ENCODE measurements at regions of chr3 and their contacts with region 1.

Region 1: DNA sequence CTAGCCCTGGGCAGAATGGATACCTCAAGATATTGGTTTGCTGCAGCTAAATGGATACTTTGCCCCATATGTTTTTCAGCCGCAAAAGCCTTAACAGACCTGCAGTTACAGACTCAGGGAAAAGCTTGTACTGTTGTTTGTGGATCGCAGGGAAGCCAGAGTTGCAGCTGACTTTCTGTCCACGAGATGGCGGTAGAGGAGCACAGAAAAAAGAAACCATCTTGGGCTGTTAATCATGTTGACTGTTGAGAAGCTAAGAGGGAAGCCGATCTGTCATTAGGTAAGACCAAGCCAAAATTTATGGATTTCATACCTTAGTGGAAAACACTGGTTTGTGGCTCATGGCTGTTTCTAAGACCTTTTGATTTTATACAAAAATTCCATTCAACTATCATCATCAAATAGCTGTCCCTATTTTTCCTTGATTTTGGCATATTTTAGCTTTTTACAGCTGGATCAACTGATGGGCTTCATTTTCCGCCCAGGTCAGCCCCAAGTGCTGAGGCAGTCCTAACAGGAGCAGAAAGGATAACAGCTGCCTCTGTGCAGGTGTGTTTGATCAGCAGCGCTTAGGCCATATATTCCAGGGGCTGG is 205.7 kb upstream of the ZPLD1 start:
- DNase-seq: peak; percentile 80 to 92 (median 89)
- H3K4me3 ChIP-seq: no peak overlapping the region
- H3K27ac ChIP-seq: no peak overlapping the region
- H3K4me1 ChIP-seq: peaks cover 3 to 25% (median 15%) of the 10 kb centered on the region in 4 experiments
- H3K27me3 ChIP-seq: no peaks in the 10 kb centered on the region

Region 2: GRCh38 chr3:101433653-101434052 is 795.5 kb before region 1 on chr3:
- CTCF ChIA-PET with region 1: no interaction called
- POLR2A ChIA-PET with region 1: no interaction called
- DNase-seq: no peak
- H3K4me3 ChIP-seq: no peak overlapping the region
- H3K27ac ChIP-seq: no peak overlapping the region
- H3K4me1 ChIP-seq: no peaks in the 10 kb centered on the region
- H3K27me3 ChIP-seq: no peaks in the 10 kb centered on the region

Region 3: GRCh38 chr3:101816215-101817149 is 412.7 kb before region 1 on chr3:
- CTCF ChIA-PET with region 1: interaction called, 414 read pairs
- POLR2A ChIA-PET with region 1: no interaction called
- DNase-seq: no peak
- H3K4me3 ChIP-seq: no peak overlapping the region
- H3K27ac ChIP-seq: no peak overlapping the region
- H3K4me1 ChIP-seq: peaks cover 0 to 31% (median 3%) of the 10 kb centered on the region in 4 experiments
- H3K27me3 ChIP-seq: no peaks in the 10 kb centered on the region

Region 4: DNA sequence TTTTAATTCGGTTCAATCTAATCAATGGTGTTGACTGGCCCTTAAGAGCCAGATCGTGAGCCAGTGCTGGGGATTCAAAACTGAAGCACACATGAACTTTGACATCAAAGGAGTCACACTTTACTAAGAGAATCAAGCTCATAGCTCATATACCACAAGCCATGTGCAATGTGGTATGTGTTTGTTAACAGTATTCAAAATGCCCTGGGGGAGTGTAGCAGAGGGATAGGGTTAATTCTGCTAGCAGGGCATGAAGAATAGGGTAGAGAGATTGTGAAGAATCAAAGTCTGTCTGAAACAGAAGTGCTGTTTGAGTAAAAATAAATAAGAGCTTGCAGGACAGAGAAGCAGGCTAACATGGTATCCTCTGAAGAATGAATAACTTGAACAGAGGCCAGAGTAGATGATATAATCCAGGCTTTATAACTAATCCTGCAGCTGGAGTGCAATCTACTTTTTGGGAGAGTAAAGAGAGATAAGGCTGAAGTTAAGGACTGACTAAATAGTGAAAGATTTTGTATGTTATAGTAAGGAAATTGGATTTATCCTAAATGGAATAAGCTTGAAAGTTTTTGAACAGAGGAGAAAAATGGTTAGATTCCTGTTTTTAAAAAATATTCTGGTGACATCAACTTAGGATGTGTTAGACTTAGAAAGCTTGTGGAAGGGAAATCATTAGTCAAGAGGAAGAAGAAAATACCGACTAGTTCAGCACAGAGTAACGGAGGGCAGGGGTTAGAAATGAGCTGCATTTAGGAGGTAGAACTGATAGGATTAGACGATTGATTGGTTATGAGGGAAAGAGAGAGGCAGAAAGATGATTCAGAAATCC is 87.8 kb before region 1 on chr3:
- CTCF ChIA-PET with region 1: interaction called, 12 read pairs
- POLR2A ChIA-PET with region 1: no interaction called
- DNase-seq: no peak
- H3K4me3 ChIP-seq: no peak overlapping the region
- H3K27ac ChIP-seq: no peak overlapping the region
- H3K4me1 ChIP-seq: peaks cover 0 to 3% (median 0%) of the 10 kb centered on the region in 4 experiments
- H3K27me3 ChIP-seq: no peaks in the 10 kb centered on the region

Region 5: GRCh38 chr3:102240720-102241119 is 11.6 kb after region 1 on chr3:
- CTCF ChIA-PET with region 1: interaction called, 21 read pairs
- POLR2A ChIA-PET with region 1: no interaction called
- DNase-seq: no peak
- H3K4me3 ChIP-seq: no peak overlapping the region
- H3K27ac ChIP-seq: no peak overlapping the region
- H3K4me1 ChIP-seq: no peaks in the 10 kb centered on the region
- H3K27me3 ChIP-seq: no peaks in the 10 kb centered on the region

Region 6: GRCh38 chr3:102415553-102415952 is 186.4 kb after region 1 on chr3:
- CTCF ChIA-PET with region 1: no interaction called
- POLR2A ChIA-PET with region 1: no interaction called
- DNase-seq: peak in 2 of 3 donors; percentile 25
- H3K4me3 ChIP-seq: peak overlapping the region in 2 of 7 experiments; percentile 32 to 53
- H3K27ac ChIP-seq: peak overlapping the region; percentile 15 to 21
- H3K4me1 ChIP-seq: no peaks in the 10 kb centered on the region
- H3K27me3 ChIP-seq: no peaks in the 10 kb centered on the region

Region 7: GRCh38 chr3:102536456-102536855 is 307.3 kb after region 1 on chr3:
- CTCF ChIA-PET with region 1: interaction called, 144 read pairs
- POLR2A ChIA-PET with region 1: interaction called, 3 read pairs
- DNase-seq: peak; percentile 40 to 60 (median 55)
- H3K4me3 ChIP-seq: no peak overlapping the region
- H3K27ac ChIP-seq: no peak overlapping the region
- H3K4me1 ChIP-seq: peaks cover 0 to 8% (median 3%) of the 10 kb centered on the region in 4 experiments
- H3K27me3 ChIP-seq: no peaks in the 10 kb centered on the region